Activated T-helper 2 cell treated with anti-CD3 and anti-CD28 coated beads, Interferon-gamma antibody, Interleukin-2, Interleukin-4, amounts not matched to agents 10 μg/mL and 5 μg/mL and 100 μg/mL, durations not matched to agents 14 hours and 24 hours and 36 hours (primary cell): ENCODE measurements at regions of chr11 and their contacts with region 1.

Region 1: DNA sequence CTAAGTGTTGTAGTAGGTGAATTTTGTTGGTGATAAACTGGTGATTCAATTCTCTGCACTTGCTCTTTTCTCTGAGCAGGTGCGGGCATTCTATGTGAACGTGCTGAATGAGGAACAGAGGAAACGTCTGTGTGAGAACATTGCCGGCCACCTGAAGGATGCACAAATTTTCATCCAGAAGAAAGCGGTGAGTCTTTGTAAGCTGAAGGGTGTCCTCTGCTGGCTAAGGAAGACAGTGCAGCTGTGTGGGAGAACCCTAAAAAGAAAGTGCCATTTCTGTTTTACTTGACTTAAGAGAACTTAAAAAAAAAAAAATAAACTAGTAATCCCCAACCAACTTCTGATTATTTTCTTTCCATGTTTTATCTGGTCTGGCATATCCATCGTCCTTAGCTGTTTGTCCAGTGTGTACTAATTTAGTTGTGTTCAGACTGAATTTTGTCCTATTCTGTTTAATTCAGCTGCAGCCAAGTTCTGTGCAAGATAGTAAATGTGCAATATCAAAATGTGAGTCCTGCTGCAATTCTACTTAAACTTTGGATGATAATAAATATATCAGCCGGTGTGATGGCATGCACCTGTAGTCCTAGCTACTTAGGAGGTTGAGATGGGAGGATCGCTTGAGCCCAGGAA is 29.6 kb downstream of the CAT start:
- DNase-seq: peak; percentile 20
- H3K4me3 Mint-ChIP-seq: no peak overlapping the region
- H3K27ac Mint-ChIP-seq: no peak overlapping the region
- H3K4me1 Mint-ChIP-seq: peaks cover 4% of the 10 kb centered on the region
- H3K27me3 Mint-ChIP-seq: no peaks in the 10 kb centered on the region

Region 2: GRCh38 chr11:34366522-34366921 is 101.8 kb before region 1 on chr11:
- intact Hi-C with region 1: loop called (anchors 1 kb)
- DNase-seq: no peak
- H3K4me3 Mint-ChIP-seq: no peak overlapping the region
- H3K27ac Mint-ChIP-seq: no peak overlapping the region
- H3K4me1 Mint-ChIP-seq: peaks cover 12% of the 10 kb centered on the region
- H3K27me3 Mint-ChIP-seq: peaks cover 22% of the 10 kb centered on the region

Region 3: GRCh38 chr11:34395916-34396550 is 72.3 kb before region 1 on chr11:
- intact Hi-C with region 1: no loop called
- DNase-seq: no peak
- H3K4me3 Mint-ChIP-seq: no peak overlapping the region
- H3K27ac Mint-ChIP-seq: no peak overlapping the region
- H3K4me1 Mint-ChIP-seq: no peaks in the 10 kb centered on the region
- H3K27me3 Mint-ChIP-seq: peaks cover 22% of the 10 kb centered on the region